ENCODE measurements at regions of chr1 and their contacts with region 1.

Region 1: DNA sequence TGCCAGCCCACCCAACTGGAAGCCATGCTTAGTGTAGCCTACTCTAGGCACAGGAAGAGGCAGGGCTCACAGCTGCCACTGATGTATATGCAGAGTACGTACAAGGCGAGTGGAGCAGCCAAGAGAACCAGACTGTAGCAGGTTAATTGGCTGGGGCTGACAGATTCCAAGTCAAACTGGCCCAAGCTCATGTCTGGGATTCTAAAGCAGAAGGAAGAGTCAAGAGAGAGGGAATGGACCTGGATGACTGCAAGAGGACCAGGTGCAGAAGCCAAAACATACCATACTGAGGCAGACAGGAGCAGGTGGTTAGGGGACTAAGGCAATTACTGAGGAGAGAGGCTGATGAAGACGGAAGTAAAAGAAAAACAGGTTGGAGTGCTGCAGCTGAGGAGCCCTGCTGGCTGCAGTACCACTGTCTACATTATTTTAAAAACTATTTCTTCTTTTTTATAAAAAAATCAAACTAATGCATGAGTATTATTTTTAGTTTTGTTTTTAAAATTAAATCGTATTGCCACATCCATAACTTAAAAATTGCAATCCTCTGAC is 51.4 kb upstream of the LRRN2 start:
- DNase-seq: no peak
- ATAC-seq: no peak
- H3K4me3 ChIP-seq: no peak overlapping the region
- H3K4me3 Mint-ChIP-seq: no peak overlapping the region
- H3K27ac ChIP-seq: no peak overlapping the region
- H3K27ac Mint-ChIP-seq: no peak overlapping the region
- H3K4me1 ChIP-seq: no peaks in the 10 kb centered on the region
- H3K4me1 Mint-ChIP-seq: no peaks in the 10 kb centered on the region
- H3K27me3 ChIP-seq: no peaks in the 10 kb centered on the region
- H3K27me3 Mint-ChIP-seq: peaks cover 9% of the 10 kb centered on the region
- CTCF ChIP-seq: no peak

Region 2: DNA sequence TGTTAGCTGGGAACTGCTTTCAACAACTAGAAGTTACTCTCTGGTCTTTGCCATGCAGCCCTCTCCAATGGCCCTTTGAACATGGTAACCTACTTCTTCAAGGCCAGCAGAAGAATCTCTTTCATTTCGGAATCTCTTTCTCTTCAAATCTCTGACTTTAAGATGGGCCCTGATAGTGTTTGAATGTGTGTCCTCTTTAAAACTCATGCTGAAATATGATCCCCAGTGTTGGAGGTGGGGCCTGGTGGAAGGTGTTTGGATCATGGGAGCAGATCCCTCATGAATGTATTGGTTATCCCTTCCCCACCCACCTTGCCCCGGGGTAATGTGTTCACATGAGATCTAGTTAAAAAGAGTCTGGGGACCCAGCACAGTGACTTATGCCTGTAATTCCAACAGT is 718.4 kb before region 1 on chr1:
- CTCF ChIA-PET with region 1: no interaction called
- POLR2A ChIA-PET with region 1: no interaction called
- intact Hi-C with region 1: loop called in 1 of 2 experiments (anchors 5 kb)
- DNase-seq: no peak
- ATAC-seq: no peak
- H3K4me3 ChIP-seq: no peak overlapping the region
- H3K4me3 Mint-ChIP-seq: no peak overlapping the region
- H3K27ac ChIP-seq: no peak overlapping the region
- H3K27ac Mint-ChIP-seq: no peak overlapping the region
- H3K4me1 ChIP-seq: no peaks in the 10 kb centered on the region
- H3K4me1 Mint-ChIP-seq: no peaks in the 10 kb centered on the region
- H3K27me3 ChIP-seq: no peaks in the 10 kb centered on the region
- H3K27me3 Mint-ChIP-seq: peaks cover under 1% of the 10 kb centered on the region
- CTCF ChIP-seq: no peak